ENCODE measurements at regions of chr7 and their contacts with region 1.

Region 1: GRCh38 chr7:101688183-101688831 is 59.2 kb upstream of the MYL10 start:
- DNase-seq: peak; percentile 34
- H3K4me3 ChIP-seq: peak overlapping the region in 2 of 3 experiments; percentile 34 to 35
- H3K27ac ChIP-seq: no peak overlapping the region
- H3K4me1 ChIP-seq: peaks cover 6% of the 10 kb centered on the region
- H3K27me3 ChIP-seq: no peaks in the 10 kb centered on the region
- CTCF ChIP-seq: peak; percentile 53 to 92

Region 2: DNA sequence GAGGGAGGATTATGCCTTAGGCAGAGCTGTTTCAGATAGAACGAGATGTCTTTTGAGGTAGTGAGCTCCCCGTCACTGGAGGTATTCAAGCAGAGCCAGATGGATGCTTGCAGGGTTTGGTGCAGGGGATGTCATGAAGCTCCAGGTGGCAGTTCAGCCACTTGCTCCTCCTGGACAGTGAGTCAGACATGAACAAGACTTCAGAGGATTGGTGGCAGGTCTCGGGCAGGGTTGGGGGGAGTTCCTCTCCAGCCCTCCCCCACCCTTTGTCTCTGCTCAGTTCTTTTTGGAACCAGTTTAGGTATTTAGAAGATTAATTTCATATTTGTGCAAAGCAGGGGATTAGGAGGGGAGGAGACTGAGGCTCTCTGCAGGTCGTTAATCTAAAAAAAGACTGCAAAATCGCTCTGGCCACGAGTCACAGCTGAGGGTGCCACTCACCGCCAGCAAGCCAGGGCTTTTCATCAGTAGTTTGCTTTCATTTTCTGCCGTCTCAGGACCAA is 37.7 kb before region 1 on chr7:
- CTCF ChIA-PET with region 1: no interaction called
- dilution Hi-C with region 1: no loop called
- in situ Hi-C with region 1: no loop called
- intact Hi-C with region 1: no loop called
- DNase-seq: no peak
- H3K4me3 ChIP-seq: no peak overlapping the region
- H3K27ac ChIP-seq: no peak overlapping the region
- H3K4me1 ChIP-seq: no peaks in the 10 kb centered on the region
- H3K27me3 ChIP-seq: no peaks in the 10 kb centered on the region
- CTCF ChIP-seq: no peak

Region 3: GRCh38 chr7:101718363-101718762 is 30.1 kb after region 1 on chr7:
- CTCF ChIA-PET with region 1: no interaction called
- dilution Hi-C with region 1: no loop called
- in situ Hi-C with region 1: no loop called
- intact Hi-C with region 1: no loop called
- DNase-seq: no peak
- H3K4me3 ChIP-seq: no peak overlapping the region
- H3K27ac ChIP-seq: no peak overlapping the region
- H3K4me1 ChIP-seq: peaks cover 5% of the 10 kb centered on the region
- H3K27me3 ChIP-seq: peaks cover 2% of the 10 kb centered on the region
- CTCF ChIP-seq: no peak

Region 4: GRCh38 chr7:102272075-102272917 is 584.0 kb after region 1 on chr7:
- CTCF ChIA-PET with region 1: no interaction called
- dilution Hi-C with region 1: no loop called
- in situ Hi-C with region 1: no loop called
- intact Hi-C with region 1: loop called (anchors 1 kb)
- DNase-seq: peak; percentile 66
- H3K4me3 ChIP-seq: no peak overlapping the region
- H3K27ac ChIP-seq: no peak overlapping the region
- H3K4me1 ChIP-seq: peaks cover 5% of the 10 kb centered on the region
- H3K27me3 ChIP-seq: no peaks in the 10 kb centered on the region
- CTCF ChIP-seq: peak; percentile 91 to 95

Measured in mammary epithelial cell (primary cell).